Vagina (tissue), 2 donors: ENCODE measurements at regions of chr19 and their contacts with region 1.

Region 1: GRCh38 chr19:49546825-49547565 is 19.2 kb downstream of the RCN3 start:
- DNase-seq: no peak
- H3K4me3 ChIP-seq: peak overlapping the region in 1 of 2 donors; percentile 10
- H3K27ac ChIP-seq: peak overlapping the region; percentile 60
- H3K4me1 ChIP-seq: peaks cover 12% of the 10 kb centered on the region
- H3K27me3 ChIP-seq: no peaks in the 10 kb centered on the region
- CTCF ChIP-seq: peak; percentile 67 to 97 (median 90)
- POLR2A ChIP-seq: no peak

Region 2: DNA sequence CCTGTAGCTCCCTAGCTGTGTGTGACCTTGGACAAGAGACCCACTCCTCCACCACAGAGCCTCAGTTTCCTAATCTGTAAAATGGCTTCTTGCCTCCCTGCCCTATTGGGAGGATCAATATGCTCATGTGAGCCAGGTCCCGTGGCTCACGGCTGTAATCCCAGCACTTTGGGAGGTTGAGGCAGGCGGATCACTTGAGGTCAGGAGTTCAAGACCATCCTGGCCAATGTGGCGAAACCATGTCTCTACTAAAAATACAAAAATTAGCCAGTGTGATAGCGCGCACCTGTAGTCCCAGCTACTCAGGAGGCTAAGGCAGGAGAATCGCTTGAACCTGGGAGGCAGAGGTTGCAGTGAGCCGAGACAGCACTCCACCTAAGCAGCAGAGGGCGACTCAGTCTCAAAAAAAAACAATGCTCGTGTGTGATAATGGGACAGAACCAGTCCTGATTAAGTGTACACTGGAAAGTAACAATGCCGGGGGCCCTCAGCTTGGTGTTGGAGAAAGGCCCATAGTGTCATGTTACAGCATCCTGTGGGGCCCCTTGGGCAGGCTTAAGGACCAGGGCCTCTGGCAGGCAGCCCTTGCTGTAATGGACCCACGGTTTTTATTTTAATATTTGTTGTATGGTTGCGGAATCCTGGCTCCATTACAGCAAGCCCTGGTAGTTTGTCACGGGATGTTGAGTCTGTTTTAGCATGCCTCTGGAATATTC is 44.0 kb before region 1 on chr19:
- intact Hi-C with region 1: loop called (anchors 2 kb)
- DNase-seq: peak in 1 of 2 donors; percentile 89
- H3K4me3 ChIP-seq: no peak overlapping the region
- H3K27ac ChIP-seq: peak overlapping the region; percentile 93
- H3K4me1 ChIP-seq: peaks cover 35% of the 10 kb centered on the region
- H3K27me3 ChIP-seq: no peaks in the 10 kb centered on the region
- CTCF ChIP-seq: peak; percentile 44 to 71 (median 53)
- POLR2A ChIP-seq: no peak